ENCODE measurements at regions of chr9 and their contacts with region 1.

Region 1: GRCh38 chr9:114082017-114082762 is 4.1 kb upstream of the AMBP start:
- DNase-seq: peak; percentile 92 to 93
- H3K4me3 ChIP-seq: no peak overlapping the region
- H3K4me3 Mint-ChIP-seq: peak overlapping the region; percentile 31
- H3K27ac Mint-ChIP-seq: peak overlapping the region; percentile 83
- H3K4me1 ChIP-seq: peaks cover 52% of the 10 kb centered on the region
- H3K4me1 Mint-ChIP-seq: peaks cover 40% of the 10 kb centered on the region
- H3K27me3 ChIP-seq: no peaks in the 10 kb centered on the region
- H3K27me3 Mint-ChIP-seq: no peaks in the 10 kb centered on the region
- CTCF ChIP-seq: peak; percentile 77 to 94

Region 2: DNA sequence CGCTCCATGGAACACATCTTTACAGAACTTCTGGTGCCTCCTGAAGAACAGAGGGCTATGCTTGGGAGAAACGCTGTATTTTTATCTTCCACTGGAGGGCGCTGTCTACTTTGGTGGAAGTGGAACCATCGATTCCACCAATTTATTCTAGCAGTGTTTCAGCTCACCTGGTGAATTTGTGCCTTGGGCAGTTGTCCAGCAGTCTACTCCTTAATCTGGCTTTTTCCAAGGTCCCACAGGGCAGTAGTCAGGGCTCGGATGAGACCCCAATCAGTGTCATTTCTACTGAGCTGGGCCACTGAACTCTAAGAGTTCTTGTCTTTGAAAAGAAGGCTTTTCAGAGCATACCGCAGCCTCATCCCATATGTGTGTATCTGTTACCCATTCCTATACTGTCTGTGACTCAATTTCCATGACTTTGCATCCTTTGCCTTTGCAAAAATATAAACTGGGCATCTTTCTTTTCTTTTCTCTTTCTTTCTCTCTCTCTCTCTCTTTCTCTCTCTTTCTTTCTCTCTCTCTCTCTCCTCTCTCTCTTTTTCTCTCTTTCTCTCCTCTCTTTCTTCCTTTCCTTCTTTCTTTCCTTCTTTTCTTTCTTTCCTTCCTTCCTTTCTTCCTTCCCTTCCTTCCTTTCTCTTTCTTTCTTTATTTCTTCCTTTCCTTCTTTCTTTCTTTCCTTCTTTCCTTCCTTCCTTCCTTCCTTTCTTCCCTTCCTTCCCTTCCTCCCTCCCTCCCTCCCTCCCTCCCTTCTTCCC is 344.5 kb before region 1 on chr9:
- CTCF ChIA-PET with region 1: no interaction called
- POLR2A ChIA-PET with region 1: no interaction called
- intact Hi-C with region 1: loop called (anchors 5 kb)
- DNase-seq: peak; percentile 45 to 67
- H3K4me3 ChIP-seq: no peak overlapping the region
- H3K4me3 Mint-ChIP-seq: no peak overlapping the region
- H3K27ac Mint-ChIP-seq: no peak overlapping the region
- H3K4me1 ChIP-seq: no peaks in the 10 kb centered on the region
- H3K4me1 Mint-ChIP-seq: no peaks in the 10 kb centered on the region
- H3K27me3 ChIP-seq: no peaks in the 10 kb centered on the region
- H3K27me3 Mint-ChIP-seq: peaks cover 4% of the 10 kb centered on the region
- CTCF ChIP-seq: peak; percentile 62

Region 3: GRCh38 chr9:114033397-114034103 is 48.6 kb before region 1 on chr9:
- CTCF ChIA-PET with region 1: no interaction called
- POLR2A ChIA-PET with region 1: no interaction called
- intact Hi-C with region 1: loop called (anchors 5 kb)
- DNase-seq: peak in 1 of 2 experiments; percentile 30
- H3K4me3 ChIP-seq: no peak overlapping the region
- H3K4me3 Mint-ChIP-seq: no peak overlapping the region
- H3K27ac Mint-ChIP-seq: no peak overlapping the region
- H3K4me1 ChIP-seq: no peaks in the 10 kb centered on the region
- H3K4me1 Mint-ChIP-seq: no peaks in the 10 kb centered on the region
- H3K27me3 ChIP-seq: no peaks in the 10 kb centered on the region
- H3K27me3 Mint-ChIP-seq: no peaks in the 10 kb centered on the region
- CTCF ChIP-seq: peak in 1 of 2 experiments; percentile 38

Region 4: GRCh38 chr9:114108016-114108833 is 26.0 kb after region 1 on chr9:
- CTCF ChIA-PET with region 1: interaction called, 37 read pairs
- POLR2A ChIA-PET with region 1: no interaction called
- intact Hi-C with region 1: loop called (anchors 1 kb)
- DNase-seq: peak; percentile 80 to 88
- H3K4me3 ChIP-seq: no peak overlapping the region
- H3K4me3 Mint-ChIP-seq: no peak overlapping the region
- H3K27ac Mint-ChIP-seq: peak overlapping the region; percentile 12
- H3K4me1 ChIP-seq: no peaks in the 10 kb centered on the region
- H3K4me1 Mint-ChIP-seq: peaks cover 6% of the 10 kb centered on the region
- H3K27me3 ChIP-seq: no peaks in the 10 kb centered on the region
- H3K27me3 Mint-ChIP-seq: peaks cover 2% of the 10 kb centered on the region
- CTCF ChIP-seq: peak; percentile 97 to 98

Region 5: GRCh38 chr9:114238891-114239875 is 157.0 kb after region 1 on chr9:
- CTCF ChIA-PET with region 1: interaction called, 11 read pairs
- POLR2A ChIA-PET with region 1: no interaction called
- intact Hi-C with region 1: no loop called
- DNase-seq: peak; percentile 64 to 71
- H3K4me3 ChIP-seq: no peak overlapping the region
- H3K4me3 Mint-ChIP-seq: no peak overlapping the region
- H3K27ac Mint-ChIP-seq: no peak overlapping the region
- H3K4me1 ChIP-seq: peaks cover 4% of the 10 kb centered on the region; the same call in 1 of the 2 replicates
- H3K4me1 Mint-ChIP-seq: no peaks in the 10 kb centered on the region
- H3K27me3 ChIP-seq: no peaks in the 10 kb centered on the region
- H3K27me3 Mint-ChIP-seq: no peaks in the 10 kb centered on the region
- CTCF ChIP-seq: peak; percentile 7 to 36

Region 6: DNA sequence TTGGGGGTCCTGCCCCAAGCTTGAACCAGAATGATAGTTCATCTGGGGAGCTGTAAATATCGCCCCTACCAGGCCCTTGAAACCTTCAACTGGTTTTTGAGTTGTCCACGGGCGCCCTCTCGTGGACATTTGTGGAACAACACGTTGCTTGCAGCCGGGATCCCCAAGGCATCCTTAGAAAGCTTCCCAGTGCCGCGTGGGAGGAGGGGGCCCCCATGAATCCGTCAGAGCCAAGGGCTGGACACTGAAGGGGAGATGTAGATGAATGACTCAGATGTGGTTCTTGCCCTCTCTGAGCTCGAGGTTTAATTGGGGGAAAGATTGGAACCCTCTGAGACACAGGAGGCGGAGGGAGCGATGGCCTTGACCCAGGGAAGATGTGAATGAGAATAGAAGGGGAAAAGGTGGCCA is 208.9 kb after region 1 on chr9:
- CTCF ChIA-PET with region 1: interaction called, 24 read pairs
- POLR2A ChIA-PET with region 1: no interaction called
- intact Hi-C with region 1: loop called (anchors 1 kb)
- DNase-seq: peak; percentile 70 to 80
- H3K4me3 ChIP-seq: no peak overlapping the region
- H3K4me3 Mint-ChIP-seq: no peak overlapping the region
- H3K27ac Mint-ChIP-seq: no peak overlapping the region
- H3K4me1 ChIP-seq: peaks cover 14% of the 10 kb centered on the region
- H3K4me1 Mint-ChIP-seq: peaks cover 7% of the 10 kb centered on the region
- H3K27me3 ChIP-seq: no peaks in the 10 kb centered on the region
- H3K27me3 Mint-ChIP-seq: no peaks in the 10 kb centered on the region
- CTCF ChIP-seq: peak; percentile 81 to 92